Activated CD8-positive, alpha-beta T cell treated with anti-CD3 and anti-CD28 coated beads, Interleukin-2, amount 10 ng/mL, durations not matched to agents 7 days and 5 days (primary cell): ENCODE measurements at regions of chr3 and their contacts with region 1.

Region 1: DNA sequence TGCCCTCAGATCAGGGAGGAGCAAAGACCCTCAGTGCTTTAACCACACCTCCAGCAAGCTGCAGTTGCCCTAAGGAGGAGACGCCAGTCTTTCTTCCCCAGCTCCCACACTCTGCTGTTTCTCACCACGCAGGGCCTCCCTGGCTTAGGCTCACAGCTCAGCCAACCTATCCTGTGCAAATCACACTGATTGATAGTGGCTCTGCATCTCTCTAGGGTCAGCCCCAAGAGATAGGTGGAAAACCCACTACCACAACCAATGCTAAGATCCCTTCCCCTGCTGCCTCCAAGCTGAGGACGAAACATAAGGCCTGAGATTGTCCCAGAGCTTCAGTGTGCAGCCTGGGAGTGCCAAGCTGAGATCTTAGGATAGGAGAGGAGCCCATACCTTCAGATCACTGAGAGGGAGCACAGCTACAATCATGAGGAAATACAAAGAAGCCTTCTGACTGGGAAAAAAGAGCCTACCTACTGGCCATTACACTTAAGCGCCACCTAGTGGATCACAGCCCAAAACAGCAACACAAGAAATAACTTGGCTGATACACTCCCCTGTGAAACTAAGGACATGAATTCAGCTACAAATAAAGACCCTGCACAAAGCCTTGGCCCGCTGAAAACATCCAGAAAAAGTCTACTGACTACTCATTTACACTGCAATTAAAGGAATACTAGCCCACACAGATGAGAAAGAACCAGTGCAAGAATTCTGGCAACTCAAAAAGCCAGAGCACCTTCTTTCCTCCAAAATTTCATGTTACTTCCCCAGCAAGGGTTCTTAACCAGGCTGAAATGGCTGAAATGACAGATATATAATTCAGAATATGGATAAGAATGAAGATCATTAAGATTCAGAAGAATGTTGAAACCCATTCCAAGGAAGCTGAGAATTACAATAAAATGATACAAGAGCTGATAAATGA is 271.5 kb upstream of the DCBLD2 start:
- DNase-seq: peak; percentile 59
- ATAC-seq: no peak
- H3K4me3 Mint-ChIP-seq: no peak overlapping the region
- H3K27ac Mint-ChIP-seq: no peak overlapping the region
- H3K4me1 Mint-ChIP-seq: no peaks in the 10 kb centered on the region
- H3K27me3 Mint-ChIP-seq: no peaks in the 10 kb centered on the region

Region 2: DNA sequence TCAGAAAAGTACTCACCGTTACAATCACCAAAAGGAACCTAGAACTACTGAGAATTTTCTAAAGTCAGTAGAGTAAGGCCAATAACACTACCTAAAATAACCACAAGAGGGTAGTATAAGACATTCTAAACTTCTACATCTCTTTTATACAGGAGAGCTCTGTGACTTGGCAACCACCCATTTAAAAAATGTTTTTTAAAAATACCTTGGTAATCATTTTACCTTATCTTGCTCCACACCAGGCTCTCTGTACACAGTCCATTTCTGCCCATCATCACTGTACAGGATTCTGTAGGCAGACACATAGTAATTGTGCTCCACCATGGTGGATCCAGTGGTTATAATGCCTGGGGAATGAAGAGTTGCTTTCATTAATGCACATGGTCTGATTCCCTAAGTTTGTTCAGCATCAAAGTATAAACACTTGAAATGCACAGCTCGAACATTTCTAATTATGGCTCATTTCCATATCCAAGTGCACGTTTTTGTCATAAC is 355.4 kb before region 1 on chr3:
- CTCF ChIA-PET with region 1: interaction called, 21 read pairs
- POLR2A ChIA-PET with region 1: no interaction called
- DNase-seq: no peak
- ATAC-seq: peak; percentile 57
- H3K4me3 Mint-ChIP-seq: no peak overlapping the region
- H3K27ac Mint-ChIP-seq: no peak overlapping the region
- H3K4me1 Mint-ChIP-seq: no peaks in the 10 kb centered on the region
- H3K27me3 Mint-ChIP-seq: no peaks in the 10 kb centered on the region